ENCODE measurements at regions of chr7 and their contacts with region 1.

Region 1: GRCh38 chr7:30504347-30505173 is at the start of gene GGCT:
- DNase-seq: peak; percentile 100
- ATAC-seq: peak; percentile 99
- total RNA-seq, gene GGCT: 17.4 TPM

Region 2: GRCh38 chr7:30433082-30433481 is 71.5 kb before region 1 on chr7:
- intact Hi-C with region 1: no loop called
- DNase-seq: peak; percentile 79
- ATAC-seq: peak; percentile 90

Region 3: GRCh38 chr7:30478349-30479201 is 26.0 kb before region 1 on chr7 and contains the start of gene NOD1:
- intact Hi-C with region 1: loop called (anchors 2 kb)
- DNase-seq: peak; percentile 89
- ATAC-seq: peak; percentile 96
- total RNA-seq, gene NOD1: 7.6 TPM